ENCODE measurements at regions of chr2 and their contacts with region 1.

Region 1: GRCh38 chr2:112493048-112493447 is 11.1 kb downstream of the TTL start:
- DNase-seq: no peak
- H3K4me3 ChIP-seq: no peak overlapping the region
- H3K27ac ChIP-seq: no peak overlapping the region
- H3K4me1 ChIP-seq: peaks cover 0 to 2% (median 0%) of the 10 kb centered on the region in 4 experiments
- H3K27me3 ChIP-seq: no peaks in the 10 kb centered on the region

Region 2: GRCh38 chr2:112481050-112481527 is 12.0 kb before region 1 on chr2:
- CTCF ChIA-PET with region 1: interaction called, 15 read pairs
- POLR2A ChIA-PET with region 1: no interaction called
- DNase-seq: peak; percentile 89 to 94 (median 92)
- H3K4me3 ChIP-seq: peak overlapping the region; percentile 82 to 97 (median 86)
- H3K27ac ChIP-seq: peak overlapping the region; percentile 46 to 81
- H3K4me1 ChIP-seq: peaks cover 8 to 30% (median 21%) of the 10 kb centered on the region in 4 experiments
- H3K27me3 ChIP-seq: no peaks in the 10 kb centered on the region